ENCODE measurements at regions of chr15 and their contacts with region 1.

Region 1: DNA sequence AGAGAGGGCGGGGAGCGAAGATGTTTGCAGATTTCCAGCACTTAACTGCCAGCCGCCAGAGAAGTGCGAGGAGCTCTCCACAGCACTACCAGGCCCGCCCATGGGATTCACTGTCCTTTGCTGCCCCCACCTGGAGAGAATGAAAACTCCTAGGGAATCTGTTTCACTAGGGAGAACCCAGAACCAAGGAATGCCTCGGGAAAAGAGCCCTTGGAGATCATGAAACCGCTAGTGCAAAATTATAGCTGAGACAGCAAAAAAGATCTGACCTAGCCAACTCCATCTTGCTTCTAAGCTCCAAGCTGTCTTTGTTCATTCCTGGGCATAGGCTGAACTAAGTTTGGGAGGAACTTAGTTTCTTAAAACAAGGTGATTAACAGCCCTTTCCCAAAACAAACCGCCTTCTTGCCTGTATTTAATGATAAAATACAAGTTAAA is 82.6 kb upstream of the GCNT3 start:
- DNase-seq: peak; percentile 90 to 91
- H3K4me3 ChIP-seq: no peak overlapping the region
- H3K4me3 Mint-ChIP-seq: no peak overlapping the region
- H3K27ac Mint-ChIP-seq: no peak overlapping the region
- H3K4me1 ChIP-seq: no peaks in the 10 kb centered on the region
- H3K4me1 Mint-ChIP-seq: peaks cover 6% of the 10 kb centered on the region
- H3K27me3 ChIP-seq: no peaks in the 10 kb centered on the region
- H3K27me3 Mint-ChIP-seq: no peaks in the 10 kb centered on the region
- CTCF ChIP-seq: peak; percentile 78 to 81

Region 2: DNA sequence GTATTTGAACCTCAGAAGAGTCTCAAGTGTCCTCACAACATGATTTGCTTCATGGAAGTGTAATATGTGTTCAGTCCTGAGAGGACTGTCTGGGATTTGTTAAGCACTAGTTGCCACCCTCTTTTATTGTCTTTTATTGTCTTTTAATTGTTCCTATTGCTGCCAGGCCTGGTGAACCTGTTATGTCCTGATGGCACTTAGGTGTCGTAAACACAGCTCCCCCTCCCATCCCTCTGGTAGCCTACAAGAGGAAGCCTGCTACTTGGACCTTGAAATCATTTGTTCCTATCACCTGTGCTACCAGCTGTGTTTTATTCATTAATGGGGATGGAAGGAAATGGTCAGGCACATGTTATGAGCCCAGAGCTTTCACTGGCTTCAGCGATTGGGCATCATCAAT is 404.7 kb before region 1 on chr15:
- CTCF ChIA-PET with region 1: interaction called, 5 read pairs
- POLR2A ChIA-PET with region 1: interaction called, 15 read pairs
- intact Hi-C with region 1: no loop called
- DNase-seq: no peak
- H3K4me3 ChIP-seq: no peak overlapping the region
- H3K4me3 Mint-ChIP-seq: no peak overlapping the region
- H3K27ac Mint-ChIP-seq: no peak overlapping the region
- H3K4me1 ChIP-seq: no peaks in the 10 kb centered on the region
- H3K4me1 Mint-ChIP-seq: no peaks in the 10 kb centered on the region
- H3K27me3 ChIP-seq: no peaks in the 10 kb centered on the region
- H3K27me3 Mint-ChIP-seq: no peaks in the 10 kb centered on the region
- CTCF ChIP-seq: no peak

Region 3: DNA sequence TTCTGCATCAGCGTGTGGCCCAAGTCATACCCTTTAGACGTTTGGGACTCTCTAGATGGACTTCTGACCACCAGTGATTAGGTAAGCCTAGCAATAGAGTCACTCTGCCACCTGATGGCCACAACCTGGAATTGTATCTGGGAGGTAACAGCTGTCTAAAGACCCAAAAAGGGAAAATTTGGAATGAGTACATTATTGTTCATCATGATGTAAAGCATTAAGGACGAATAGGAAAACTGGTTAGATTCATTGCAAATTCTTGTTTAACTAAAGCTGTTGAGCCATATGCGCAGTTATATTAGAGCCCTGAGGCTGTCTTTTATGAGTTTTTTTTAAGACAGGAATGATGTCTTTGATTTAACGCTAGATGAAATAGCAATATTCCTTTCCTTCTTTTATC is 27.4 kb before region 1 on chr15:
- CTCF ChIA-PET with region 1: interaction called, 21 read pairs
- POLR2A ChIA-PET with region 1: no interaction called
- intact Hi-C with region 1: loop called (anchors 1 kb)
- DNase-seq: peak; percentile 69 to 72
- H3K4me3 ChIP-seq: no peak overlapping the region
- H3K4me3 Mint-ChIP-seq: no peak overlapping the region
- H3K27ac Mint-ChIP-seq: no peak overlapping the region
- H3K4me1 ChIP-seq: no peaks in the 10 kb centered on the region
- H3K4me1 Mint-ChIP-seq: no peaks in the 10 kb centered on the region
- H3K27me3 ChIP-seq: no peaks in the 10 kb centered on the region
- H3K27me3 Mint-ChIP-seq: peaks cover 3% of the 10 kb centered on the region
- CTCF ChIP-seq: peak; percentile 68 to 78

Region 4: GRCh38 chr15:59570368-59570767 is 41.4 kb after region 1 on chr15:
- CTCF ChIA-PET with region 1: no interaction called
- POLR2A ChIA-PET with region 1: no interaction called
- intact Hi-C with region 1: no loop called
- DNase-seq: peak in 1 of 2 experiments; percentile 7
- H3K4me3 ChIP-seq: no peak overlapping the region
- H3K4me3 Mint-ChIP-seq: no peak overlapping the region
- H3K27ac Mint-ChIP-seq: peak overlapping the region; percentile 9
- H3K4me1 ChIP-seq: peaks cover 5% of the 10 kb centered on the region
- H3K4me1 Mint-ChIP-seq: peaks cover 14% of the 10 kb centered on the region
- H3K27me3 ChIP-seq: no peaks in the 10 kb centered on the region
- H3K27me3 Mint-ChIP-seq: no peaks in the 10 kb centered on the region
- CTCF ChIP-seq: no peak

Region 5: DNA sequence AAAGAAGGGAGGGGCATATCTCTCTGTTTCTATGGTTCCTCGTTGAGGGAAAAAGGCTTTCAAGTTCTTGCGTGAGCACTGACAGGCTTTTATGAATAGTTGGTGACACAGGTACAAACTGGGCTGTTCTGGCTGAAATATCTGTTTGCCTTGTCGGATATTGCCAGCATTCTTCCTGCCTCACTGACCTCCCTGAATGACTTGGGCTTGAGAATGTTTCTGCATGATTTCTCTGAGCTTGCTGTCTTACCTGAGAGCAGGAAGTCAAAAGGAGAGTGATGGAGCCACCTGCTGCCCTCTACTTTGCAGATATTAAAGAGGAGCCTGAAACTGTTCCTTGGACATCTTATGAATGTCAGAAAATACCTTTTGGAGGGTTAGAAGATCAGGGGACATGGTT is 87.4 kb after region 1 on chr15:
- CTCF ChIA-PET with region 1: interaction called, 38 read pairs
- POLR2A ChIA-PET with region 1: no interaction called
- intact Hi-C with region 1: loop called (anchors 1 kb)
- DNase-seq: peak; percentile 33 to 46
- H3K4me3 ChIP-seq: no peak overlapping the region
- H3K4me3 Mint-ChIP-seq: no peak overlapping the region
- H3K27ac Mint-ChIP-seq: no peak overlapping the region
- H3K4me1 ChIP-seq: peaks cover 18% of the 10 kb centered on the region
- H3K4me1 Mint-ChIP-seq: peaks cover 21% of the 10 kb centered on the region
- H3K27me3 ChIP-seq: no peaks in the 10 kb centered on the region; the same call in 1 of the 2 replicates
- H3K27me3 Mint-ChIP-seq: no peaks in the 10 kb centered on the region
- CTCF ChIP-seq: peak; percentile 16 to 33

Region 6: DNA sequence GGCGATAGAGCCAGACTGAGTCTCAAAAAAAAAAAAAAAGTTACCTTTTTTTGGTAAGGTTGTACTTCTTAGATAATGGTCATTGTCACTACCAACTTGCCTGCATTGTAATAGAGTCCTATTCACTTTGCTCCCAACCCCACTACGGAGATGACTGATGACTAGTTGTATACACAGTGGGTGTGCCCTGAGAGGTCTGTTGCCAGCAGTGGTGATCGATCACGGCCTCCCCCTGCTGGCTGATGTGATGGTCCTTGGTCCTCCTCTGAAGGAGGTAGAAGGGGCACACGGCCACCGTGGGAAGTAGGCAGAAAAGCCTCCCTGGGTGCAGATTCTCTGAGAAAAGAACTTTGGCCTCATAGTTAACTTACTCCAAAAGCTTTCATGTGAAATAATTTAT is 93.3 kb after region 1 on chr15:
- CTCF ChIA-PET with region 1: interaction called, 5 read pairs
- POLR2A ChIA-PET with region 1: no interaction called
- intact Hi-C with region 1: loop called (anchors 1 kb)
- DNase-seq: peak; percentile 70 to 71
- H3K4me3 ChIP-seq: no peak overlapping the region
- H3K4me3 Mint-ChIP-seq: no peak overlapping the region
- H3K27ac Mint-ChIP-seq: no peak overlapping the region
- H3K4me1 ChIP-seq: no peaks in the 10 kb centered on the region; the same call in 1 of the 2 replicates
- H3K4me1 Mint-ChIP-seq: no peaks in the 10 kb centered on the region
- H3K27me3 ChIP-seq: no peaks in the 10 kb centered on the region; the same call in 1 of the 2 replicates
- H3K27me3 Mint-ChIP-seq: no peaks in the 10 kb centered on the region
- CTCF ChIP-seq: peak; percentile 26 to 70

Region 7: GRCh38 chr15:59632714-59633113 is 103.7 kb after region 1 on chr15:
- CTCF ChIA-PET with region 1: interaction called, 21 read pairs
- POLR2A ChIA-PET with region 1: no interaction called
- intact Hi-C with region 1: no loop called
- DNase-seq: peak; percentile 40 to 47
- H3K4me3 ChIP-seq: no peak overlapping the region
- H3K4me3 Mint-ChIP-seq: no peak overlapping the region
- H3K27ac Mint-ChIP-seq: no peak overlapping the region
- H3K4me1 ChIP-seq: no peaks in the 10 kb centered on the region
- H3K4me1 Mint-ChIP-seq: no peaks in the 10 kb centered on the region
- H3K27me3 ChIP-seq: no peaks in the 10 kb centered on the region
- H3K27me3 Mint-ChIP-seq: no peaks in the 10 kb centered on the region
- CTCF ChIP-seq: peak; percentile 62

Measured in Caco-2 (cell line).